ENCODE measurements at regions of chr19 and their contacts with region 1.

Region 1: GRCh38 chr19:41479757-41480191 is 36.8 kb downstream of the ERICH4 start:
- DNase-seq: no peak

Region 2: DNA sequence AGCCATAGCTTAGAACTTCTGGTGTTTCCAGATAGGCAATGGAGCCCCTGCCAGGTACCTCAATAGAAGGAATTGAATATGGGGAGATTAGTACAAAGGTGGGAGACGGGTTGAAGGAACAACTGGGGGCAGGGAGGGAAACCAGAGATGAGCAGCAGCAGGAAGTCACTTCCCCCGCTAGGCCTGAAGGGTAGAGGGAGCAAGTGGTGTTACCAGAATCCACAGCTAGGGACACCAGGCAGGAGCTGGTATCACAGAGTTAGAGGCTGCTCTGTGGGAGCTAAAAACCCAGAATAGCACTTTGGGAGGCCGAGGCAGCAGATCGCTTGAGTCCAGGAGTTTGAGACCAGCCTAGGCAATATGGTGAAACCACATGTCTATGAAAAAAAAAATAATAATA is 230.9 kb before region 1 on chr19:
- intact Hi-C with region 1: no loop called
- DNase-seq: no peak

Region 3: GRCh38 chr19:41363753-41364523 is 115.8 kb before region 1 on chr19 and contains the start of gene B9D2:
- intact Hi-C with region 1: no loop called
- DNase-seq: peak; percentile 98
- total RNA-seq, gene B9D2: 1.9 TPM

Region 4: DNA sequence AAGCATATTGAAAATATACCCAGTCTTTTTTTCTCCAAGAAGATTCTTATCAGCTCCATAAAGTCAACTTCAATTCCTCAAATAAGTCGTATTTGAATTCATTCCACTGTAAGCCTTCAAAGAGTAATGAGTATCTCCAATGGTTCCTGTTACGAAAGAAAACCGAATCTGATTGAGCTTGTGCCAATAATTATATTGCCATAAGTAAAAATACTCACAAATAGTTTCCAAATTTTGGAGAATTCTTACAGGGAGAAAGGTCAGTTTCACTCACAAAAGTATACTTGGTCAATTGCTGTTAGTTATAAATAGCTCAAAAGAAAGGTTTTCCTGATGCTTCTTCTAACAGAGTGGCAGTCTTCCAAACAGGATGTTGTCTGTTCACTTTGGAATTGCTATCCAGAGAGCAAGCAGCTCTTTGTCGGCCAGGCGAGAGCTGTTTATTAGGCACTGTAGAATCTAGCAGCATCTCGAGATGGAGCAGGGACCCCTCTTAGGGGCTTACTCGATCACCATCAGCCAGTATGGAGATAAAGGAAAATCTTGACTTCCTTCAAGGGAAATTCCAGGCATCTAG is 23.3 kb before region 1 on chr19:
- intact Hi-C with region 1: loop called (anchors 1 kb)
- DNase-seq: no peak

Region 5: GRCh38 chr19:41500443-41500842 is 20.7 kb after region 1 on chr19:
- intact Hi-C with region 1: loop called (anchors 1 kb)
- DNase-seq: no peak

Region 6: GRCh38 chr19:41531438-41532311 is 51.9 kb after region 1 on chr19:
- intact Hi-C with region 1: loop called (anchors 1 kb)
- DNase-seq: peak; percentile 89

Measured in cardiac septum (tissue), 1 donor.